ENCODE measurements at regions of chr2 and their contacts with region 1.

Region 1: GRCh38 chr2:205680067-205680466 is 2.2 kb upstream of the NRP2 start:
- DNase-seq: peak; percentile 86 to 89
- H3K4me3 ChIP-seq: no peak overlapping the region
- H3K27ac ChIP-seq: no peak overlapping the region
- H3K4me1 ChIP-seq: peaks cover 6 to 20% (median 13%) of the 10 kb centered on the region in 4 experiments
- H3K27me3 ChIP-seq: peaks cover 4 to 24% (median 20%) of the 10 kb centered on the region in 4 experiments; a peak in 6 of 7 replicates
- CTCF ChIP-seq: peak; percentile 41 to 88 (median 76)
- EP300 ChIP-seq: no peak
- POLR2A ChIP-seq: no peak
- RAD21 ChIP-seq: peak; percentile 85 to 87

Region 2: DNA sequence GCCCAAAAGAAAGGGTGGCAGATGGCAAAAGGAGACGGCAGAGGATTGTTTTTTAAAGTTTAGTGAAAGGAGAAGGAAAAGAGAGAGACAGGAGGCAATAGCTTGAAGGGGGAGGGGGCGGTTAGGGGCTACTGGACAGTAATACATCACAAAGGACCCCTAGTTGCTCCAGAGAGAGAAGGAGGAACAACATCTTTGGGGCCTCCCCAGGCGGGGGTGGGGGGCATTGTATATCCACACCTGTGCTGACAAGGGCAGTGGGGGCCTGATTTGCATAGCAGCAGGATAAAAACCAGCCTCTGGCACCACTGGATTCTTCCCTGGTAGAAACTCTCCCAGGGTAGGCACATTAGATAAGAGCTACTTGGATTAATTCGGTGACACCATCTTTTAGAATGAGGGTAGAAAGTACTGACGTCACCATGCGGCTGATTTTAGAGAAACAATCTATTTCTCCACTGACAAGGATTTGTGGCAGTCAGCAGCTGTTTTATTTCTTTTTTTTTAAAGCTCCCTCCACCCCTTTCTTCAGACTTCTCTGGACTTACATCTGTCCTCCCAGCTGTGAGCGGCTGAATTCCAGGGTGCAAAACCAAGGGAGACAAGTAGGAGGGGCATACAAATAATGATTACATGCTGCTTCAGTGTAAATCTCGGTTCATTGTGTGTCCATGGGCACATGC is 197.5 kb before region 1 on chr2:
- CTCF ChIA-PET with region 1: interaction called, 12 read pairs
- POLR2A ChIA-PET with region 1: no interaction called
- DNase-seq: peak; percentile 56 to 74
- H3K4me3 ChIP-seq: peak overlapping the region in 1 of 4 experiments; percentile 38; a peak in 2 of 8 replicates
- H3K27ac ChIP-seq: peak overlapping the region; percentile 83; the same call in 1 of the 2 replicates
- H3K4me1 ChIP-seq: peaks cover 11 to 32% (median 20%) of the 10 kb centered on the region in 4 experiments
- H3K27me3 ChIP-seq: no peaks in the 10 kb centered on the region
- CTCF ChIP-seq: no peak
- EP300 ChIP-seq: peak in 1 of 2 experiments; percentile 96; a peak in 1 of 3 replicates
- POLR2A ChIP-seq: no peak
- RAD21 ChIP-seq: peak; percentile 7 to 15; a peak in 2 of 4 replicates

Region 3: GRCh38 chr2:205596581-205596980 is 83.5 kb before region 1 on chr2:
- CTCF ChIA-PET with region 1: interaction called, 10 read pairs
- POLR2A ChIA-PET with region 1: no interaction called
- DNase-seq: no peak
- H3K4me3 ChIP-seq: no peak overlapping the region
- H3K27ac ChIP-seq: no peak overlapping the region
- H3K4me1 ChIP-seq: no peaks in the 10 kb centered on the region
- H3K27me3 ChIP-seq: no peaks in the 10 kb centered on the region
- CTCF ChIP-seq: peak in 2 of 3 experiments; percentile 9 to 11; a peak in 1 of 4 replicates
- EP300 ChIP-seq: no peak
- POLR2A ChIP-seq: no peak
- RAD21 ChIP-seq: peak; percentile 51 to 65

Region 4: GRCh38 chr2:205629027-205629817 is 50.8 kb before region 1 on chr2:
- CTCF ChIA-PET with region 1: interaction called, 11 read pairs
- POLR2A ChIA-PET with region 1: no interaction called
- DNase-seq: no peak
- H3K4me3 ChIP-seq: no peak overlapping the region
- H3K27ac ChIP-seq: no peak overlapping the region
- H3K4me1 ChIP-seq: peaks cover 0 to 5% (median 0%) of the 10 kb centered on the region in 4 experiments; a peak in 4 of 7 replicates
- H3K27me3 ChIP-seq: no peaks in the 10 kb centered on the region; a peak in 1 of 7 replicates
- CTCF ChIP-seq: no peak
- EP300 ChIP-seq: no peak
- POLR2A ChIP-seq: no peak
- RAD21 ChIP-seq: no peak

Region 5: GRCh38 chr2:205660521-205661124 is 19.4 kb before region 1 on chr2:
- CTCF ChIA-PET with region 1: interaction called, 18 read pairs
- POLR2A ChIA-PET with region 1: no interaction called
- DNase-seq: peak in 1 of 2 experiments; percentile 30
- H3K4me3 ChIP-seq: no peak overlapping the region
- H3K27ac ChIP-seq: no peak overlapping the region
- H3K4me1 ChIP-seq: peaks cover 0 to 4% (median 0%) of the 10 kb centered on the region in 4 experiments; a peak in 2 of 7 replicates
- H3K27me3 ChIP-seq: peaks cover 0 to 1% (median 0%) of the 10 kb centered on the region in 4 experiments; a peak in 2 of 7 replicates
- CTCF ChIP-seq: no peak
- EP300 ChIP-seq: no peak
- POLR2A ChIP-seq: no peak
- RAD21 ChIP-seq: no peak

Region 6: GRCh38 chr2:205721057-205721449 is 41.0 kb after region 1 on chr2:
- CTCF ChIA-PET with region 1: interaction called, 13 read pairs
- POLR2A ChIA-PET with region 1: interaction called, 11 read pairs
- DNase-seq: no peak
- H3K4me3 ChIP-seq: peak overlapping the region in 2 of 4 experiments; percentile 14 to 20; a peak in 2 of 8 replicates
- H3K27ac ChIP-seq: peak overlapping the region; percentile 54; the same call in 1 of the 2 replicates
- H3K4me1 ChIP-seq: peaks cover 12 to 24% (median 21%) of the 10 kb centered on the region in 4 experiments
- H3K27me3 ChIP-seq: no peaks in the 10 kb centered on the region
- CTCF ChIP-seq: peak; percentile 6 to 60 (median 53)
- EP300 ChIP-seq: no peak
- POLR2A ChIP-seq: no peak
- RAD21 ChIP-seq: peak in 1 of 2 experiments; percentile 31; a peak in 2 of 4 replicates

Region 7: DNA sequence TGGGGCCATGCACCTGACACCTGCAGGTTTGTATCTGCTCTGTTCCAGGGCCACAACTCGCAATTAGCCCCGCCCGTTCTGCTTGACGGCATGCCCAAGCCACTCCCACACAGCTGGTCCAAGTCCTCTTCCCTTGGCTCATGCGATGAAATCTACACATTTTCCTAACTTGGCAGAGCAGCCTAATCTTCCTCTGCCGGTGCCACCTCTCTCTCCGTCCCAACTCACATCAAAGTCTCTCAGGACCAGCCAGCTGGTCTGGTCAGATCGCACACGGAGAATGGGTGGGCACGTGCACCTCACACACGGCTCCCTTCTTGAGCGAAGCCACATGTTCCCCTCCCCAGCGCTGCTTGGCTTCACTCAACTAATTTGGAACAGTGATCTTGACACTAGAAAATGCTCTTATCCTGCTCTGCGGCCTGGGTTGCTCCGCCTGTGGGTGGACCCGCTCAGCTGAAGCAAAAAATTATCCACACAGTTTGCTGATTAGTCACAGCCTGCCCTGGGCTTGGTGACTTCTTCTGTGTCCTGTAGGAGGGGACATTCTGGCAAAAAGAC is 178.9 kb after region 1 on chr2:
- CTCF ChIA-PET with region 1: no interaction called
- POLR2A ChIA-PET with region 1: no interaction called
- DNase-seq: no peak
- H3K4me3 ChIP-seq: no peak overlapping the region
- H3K27ac ChIP-seq: no peak overlapping the region
- H3K4me1 ChIP-seq: no peaks in the 10 kb centered on the region
- H3K27me3 ChIP-seq: no peaks in the 10 kb centered on the region; a peak in 1 of 7 replicates
- CTCF ChIP-seq: no peak
- EP300 ChIP-seq: no peak
- POLR2A ChIP-seq: no peak
- RAD21 ChIP-seq: no peak